GM12878 (cell line): ENCODE measurements at regions of chr11 and their contacts with region 1.

Region 1: GRCh38 chr11:22169833-22170232 is 23.1 kb upstream of the ANO5 start:
- DNase-seq: no peak
- ATAC-seq: peak; percentile 61; the same call in 2 of the 3 replicates
- H3K4me3 ChIP-seq: no peak overlapping the region
- H3K27ac ChIP-seq: no peak overlapping the region
- H3K4me1 ChIP-seq: no peaks in the 10 kb centered on the region
- H3K27me3 ChIP-seq: no peaks in the 10 kb centered on the region; a peak in 1 of 4 replicates
- CTCF ChIP-seq: peak in 1 of 3 experiments; percentile 16; a peak in 2 of 6 replicates
- EP300 ChIP-seq: no peak
- POLR2A ChIP-seq: no peak
- RAD21 ChIP-seq: peak; percentile 46

Region 2: DNA sequence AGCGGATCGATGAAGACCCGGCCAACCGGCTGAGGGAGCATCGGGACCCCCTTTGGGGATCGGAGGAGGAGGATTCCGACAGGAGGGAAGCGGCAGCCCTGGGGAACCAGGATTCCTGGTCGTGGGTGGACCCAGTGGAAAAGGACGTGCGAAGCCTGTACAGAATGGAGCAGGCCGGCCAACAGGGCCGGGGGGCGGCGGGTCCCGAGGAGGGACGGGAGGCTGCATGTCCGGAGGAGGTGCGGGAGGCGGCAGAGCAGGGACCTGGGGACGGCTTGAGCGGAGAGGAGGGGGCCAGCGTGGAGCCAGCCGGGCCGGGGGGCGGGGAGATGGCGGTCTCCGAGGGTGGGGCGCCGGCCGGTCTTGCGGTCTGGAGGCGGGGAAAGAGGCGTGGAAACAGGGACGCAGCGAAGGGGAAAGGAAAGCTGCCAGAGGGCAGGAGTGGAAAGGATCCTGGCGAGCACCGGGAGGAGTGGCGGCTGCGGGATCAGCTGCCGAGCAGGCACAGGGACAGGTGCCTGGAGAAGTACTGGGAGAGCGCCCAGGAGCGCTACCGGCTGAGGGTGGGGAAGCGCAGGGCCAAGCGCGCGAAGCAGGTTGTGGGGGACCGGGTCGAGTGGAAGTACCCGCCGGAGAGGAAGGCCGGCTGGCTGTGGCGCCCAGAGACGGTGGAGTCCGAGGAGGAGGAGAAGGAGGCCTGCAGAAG is 23.0 kb after region 1 on chr11 and contains the start of gene ANO5:
- CTCF ChIA-PET with region 1: interaction called, 8 read pairs
- POLR2A ChIA-PET with region 1: interaction called, 6 read pairs
- RAD21 ChIA-PET with region 1: interaction called, 14 read pairs
- SMC1A ChIA-PET with region 1: interaction called, 12 read pairs
- in situ Hi-C with region 1: no loop called
- intact Hi-C with region 1: no loop called
- DNase-seq: no peak
- ATAC-seq: peak; percentile 75
- H3K4me3 ChIP-seq: peak within 1 kb of the TSS; percentile 60
- H3K27ac ChIP-seq: no peak within 1 kb of the TSS
- H3K4me1 ChIP-seq: no peaks in the 10 kb centered on the region
- H3K27me3 ChIP-seq: no peaks in the 10 kb centered on the region
- CTCF ChIP-seq: no peak
- EP300 ChIP-seq: no peak
- POLR2A ChIP-seq: peak; percentile 48; the same call in 1 of the 2 replicates
- RAD21 ChIP-seq: no peak
- polyA plus RNA-seq, gene ANO5: 1.6 to 3.1 TPM

Region 3: GRCh38 chr11:22203281-22203680 is 33.4 kb after region 1 on chr11:
- CTCF ChIA-PET with region 1: interaction called, 10 read pairs
- POLR2A ChIA-PET with region 1: no interaction called
- RAD21 ChIA-PET with region 1: interaction called, 13 read pairs
- SMC1A ChIA-PET with region 1: interaction called, 12 read pairs
- in situ Hi-C with region 1: no loop called
- intact Hi-C with region 1: no loop called
- DNase-seq: no peak
- ATAC-seq: peak; percentile 91
- H3K4me3 ChIP-seq: no peak overlapping the region
- H3K27ac ChIP-seq: no peak overlapping the region
- H3K4me1 ChIP-seq: no peaks in the 10 kb centered on the region
- H3K27me3 ChIP-seq: no peaks in the 10 kb centered on the region
- CTCF ChIP-seq: no peak
- EP300 ChIP-seq: peak in 1 of 2 experiments; percentile 29; a peak in 1 of 4 replicates
- POLR2A ChIP-seq: no peak
- RAD21 ChIP-seq: no peak

Region 4: DNA sequence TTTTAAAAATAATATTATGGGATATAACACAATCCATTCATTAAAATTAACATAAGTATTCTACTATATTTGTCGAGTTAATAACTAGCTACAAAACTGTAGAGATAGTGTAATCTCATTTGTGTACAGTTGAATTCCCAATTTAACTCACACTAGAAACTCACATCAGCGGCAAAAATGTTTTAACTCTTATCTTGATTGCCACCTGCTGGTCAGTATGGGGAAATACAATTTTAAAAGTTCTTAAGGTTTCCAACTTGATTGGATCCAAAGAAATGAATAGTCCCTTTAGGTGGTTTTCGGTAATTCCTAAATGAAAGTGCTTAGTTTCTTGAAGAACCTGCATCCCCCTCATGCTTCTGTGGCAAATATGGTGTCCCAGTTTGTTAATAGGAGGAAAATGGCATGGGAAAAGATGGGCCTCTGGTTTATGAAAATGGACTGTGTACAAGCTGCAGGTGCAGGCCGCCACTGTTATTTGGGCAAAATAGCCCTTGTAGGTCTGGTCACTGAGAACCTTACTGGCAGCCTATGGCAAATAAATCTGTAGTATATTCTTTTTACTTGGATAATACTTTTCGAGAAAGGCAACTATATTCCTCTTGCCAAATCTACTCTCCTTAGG is 134.6 kb after region 1 on chr11:
- CTCF ChIA-PET with region 1: interaction called, 210 read pairs
- POLR2A ChIA-PET with region 1: no interaction called
- RAD21 ChIA-PET with region 1: interaction called, 120 read pairs
- SMC1A ChIA-PET with region 1: interaction called, 95 read pairs
- in situ Hi-C with region 1: loop called (anchors 5 kb)
- intact Hi-C with region 1: loop called (anchors 1 kb)
- DNase-seq: no peak
- ATAC-seq: peak; percentile 66
- H3K4me3 ChIP-seq: no peak overlapping the region
- H3K27ac ChIP-seq: no peak overlapping the region
- H3K4me1 ChIP-seq: no peaks in the 10 kb centered on the region
- H3K27me3 ChIP-seq: no peaks in the 10 kb centered on the region
- CTCF ChIP-seq: peak; percentile 40 to 64 (median 48); a peak in 5 of 6 replicates
- EP300 ChIP-seq: no peak
- POLR2A ChIP-seq: no peak
- RAD21 ChIP-seq: peak; percentile 73

Region 5: GRCh38 chr11:22337596-22338485 is 168.0 kb after region 1 on chr11 and contains the start of gene SLC17A6:
- CTCF ChIA-PET with region 1: interaction called, 10 read pairs
- POLR2A ChIA-PET with region 1: no interaction called
- RAD21 ChIA-PET with region 1: no interaction called
- SMC1A ChIA-PET with region 1: no interaction called
- in situ Hi-C with region 1: no loop called
- intact Hi-C with region 1: no loop called
- DNase-seq: no peak
- ATAC-seq: peak; percentile 76
- H3K4me3 ChIP-seq: no peak within 1 kb of the TSS
- H3K27ac ChIP-seq: no peak within 1 kb of the TSS
- H3K4me1 ChIP-seq: no peaks in the 10 kb centered on the region
- H3K27me3 ChIP-seq: peaks cover 15 to 24% of the 10 kb centered on the region in 2 experiments
- CTCF ChIP-seq: no peak
- EP300 ChIP-seq: no peak
- POLR2A ChIP-seq: no peak
- RAD21 ChIP-seq: no peak
- polyA plus RNA-seq, gene SLC17A6: not detected